Heart right ventricle (tissue), 16 donors: ENCODE measurements at regions of chr15 and their contacts with region 1.

Region 1: GRCh38 chr15:72375847-72376581 is at the start of gene HEXA:
- DNase-seq: peak; percentile 97 to 99
- ATAC-seq: peak; percentile 96 to 99 (median 98)
- H3K4me3 ChIP-seq: peak within 1 kb of the TSS; percentile 62 to 92 (median 77)
- H3K27ac ChIP-seq: peak within 1 kb of the TSS; percentile 57 to 94 (median 84)
- H3K4me1 ChIP-seq: peaks cover 6 to 74% (median 34%) of the 10 kb centered on the region in 9 donors
- H3K27me3 ChIP-seq: no peaks in the 10 kb centered on the region
- CTCF ChIP-seq: no peak
- total RNA-seq, gene HEXA: 63.3 to 129 (median 77.3) TPM

Region 2: GRCh38 chr15:72358650-72359288 is 17.2 kb before region 1 on chr15:
- intact Hi-C with region 1: loop called in 1 of 10 experiments (anchors 1 kb)
- DNase-seq: peak; percentile 52 to 55
- ATAC-seq: peak; percentile 77 to 95 (median 91)
- H3K4me3 ChIP-seq: no peak overlapping the region
- H3K27ac ChIP-seq: peak overlapping the region in 9 of 10 donors; percentile 14 to 80 (median 62)
- H3K4me1 ChIP-seq: peaks cover 0 to 53% (median 35%) of the 10 kb centered on the region in 9 donors
- H3K27me3 ChIP-seq: no peaks in the 10 kb centered on the region
- CTCF ChIP-seq: no peak

Region 3: DNA sequence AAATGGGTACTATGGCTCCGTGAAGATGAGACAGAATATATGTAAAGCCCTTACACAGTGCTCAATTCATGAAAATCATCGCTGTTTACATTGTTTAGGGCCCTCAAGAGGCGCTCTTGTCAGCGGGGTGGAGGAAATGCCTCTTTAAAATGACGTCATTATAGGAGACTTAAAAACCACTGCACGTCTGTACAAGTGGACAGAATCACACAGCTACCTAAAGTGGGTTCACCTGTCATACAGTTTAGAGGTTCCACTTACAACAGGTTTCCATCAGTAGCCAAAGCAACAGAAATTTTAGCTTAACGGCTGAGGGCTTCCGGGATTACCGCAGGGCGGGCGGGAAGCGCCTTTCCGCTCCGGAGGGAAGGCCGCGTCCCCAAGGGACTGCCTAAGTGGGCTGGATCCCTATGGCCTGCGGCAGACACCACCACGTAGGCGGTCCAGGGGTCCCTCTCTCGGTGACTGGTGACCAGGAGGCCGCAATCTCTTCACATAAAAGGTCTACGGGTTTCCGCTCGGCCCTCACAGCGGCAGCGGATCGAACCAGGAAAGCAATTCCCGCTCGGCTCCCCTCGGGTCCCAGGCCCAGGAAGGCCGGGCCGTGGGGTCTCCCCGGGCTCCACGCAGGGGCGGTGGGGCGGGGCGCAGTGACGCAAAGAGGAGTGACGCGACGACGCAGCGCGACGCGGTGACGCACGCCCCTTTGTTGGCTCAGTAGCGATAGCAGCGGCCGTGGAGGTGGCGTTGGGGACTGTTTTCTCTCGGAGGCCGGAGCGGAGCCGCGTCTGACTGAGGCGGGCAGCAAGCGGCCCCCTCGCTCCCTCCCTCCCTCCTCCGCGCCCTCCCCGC is 97.8 kb after region 1 on chr15 and contains the start of gene ARIH1:
- intact Hi-C with region 1: loop called in 6 of 10 experiments (anchors 5 to 10 kb)
- DNase-seq: peak; percentile 97 to 99
- ATAC-seq: peak; percentile 96 to 99 (median 98)
- H3K4me3 ChIP-seq: peak within 1 kb of the TSS; percentile 75 to 92 (median 84)
- H3K27ac ChIP-seq: peak within 1 kb of the TSS; percentile 97 to 100 (median 99)
- H3K4me1 ChIP-seq: peaks cover 10 to 49% (median 45%) of the 10 kb centered on the region in 9 donors
- H3K27me3 ChIP-seq: no peaks in the 10 kb centered on the region
- CTCF ChIP-seq: peak in 5 of 9 donors; percentile 11 to 48 (median 32)
- total RNA-seq, gene ARIH1: 148 to 231 (median 188) TPM

Region 4: GRCh38 chr15:73051811-73052678 is 676.0 kb after region 1 on chr15 and contains the start of gene NEO1:
- intact Hi-C with region 1: loop called in 1 of 10 experiments (anchors 10 kb)
- DNase-seq: peak; percentile 85 to 90
- ATAC-seq: peak; percentile 92 to 98 (median 94)
- H3K4me3 ChIP-seq: peak within 1 kb of the TSS; percentile 67 to 95 (median 82)
- H3K27ac ChIP-seq: peak within 1 kb of the TSS; percentile 87 to 96 (median 90)
- H3K4me1 ChIP-seq: peaks cover 0 to 23% (median 14%) of the 10 kb centered on the region in 9 donors
- H3K27me3 ChIP-seq: peaks cover 0 to 92% (median 0%) of the 10 kb centered on the region in 7 donors
- CTCF ChIP-seq: peak in 1 of 9 donors; percentile 6
- total RNA-seq, gene NEO1: 8.7 to 16.9 (median 12.3) TPM